ENCODE measurements at regions of chr19 and their contacts with region 1.

Region 1: GRCh38 chr19:40716655-40717324 is at the starts of genes COQ8B and ITPKC:
- DNase-seq: peak; percentile 100
- ATAC-seq: peak; percentile 90
- H3K4me3 ChIP-seq: peak within 1 kb of the TSS; percentile 55 to 84
- H3K27ac ChIP-seq: peak within 1 kb of the TSS; percentile 96 to 98
- H3K4me1 ChIP-seq: no peaks in the 10 kb centered on the region
- H3K27me3 ChIP-seq: no peaks in the 10 kb centered on the region
- total RNA-seq, gene COQ8B: 26.2 to 39.3 TPM
- total RNA-seq, gene ITPKC: 23.9 to 25.7 TPM

Region 2: DNA sequence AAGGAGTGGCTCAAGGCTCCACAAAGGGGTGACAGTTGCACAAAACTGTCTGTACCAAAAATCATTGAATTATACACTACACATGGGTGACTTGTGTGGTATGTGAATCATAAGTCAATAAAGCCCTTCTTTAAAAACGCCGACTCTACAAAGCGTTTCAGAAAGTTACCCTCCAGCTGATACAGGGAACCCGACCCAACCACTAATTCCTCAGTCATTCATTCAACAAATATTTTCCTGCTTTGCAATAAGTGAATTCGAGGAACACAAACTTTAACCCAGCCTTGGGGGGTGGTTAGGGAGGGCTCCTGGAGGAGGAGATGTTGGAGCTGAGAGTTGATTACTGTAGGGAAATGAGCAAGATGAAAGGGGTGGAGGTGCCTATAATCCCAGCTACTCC is 83.6 kb before region 1 on chr19:
- intact Hi-C with region 1: no loop called
- DNase-seq: no peak
- ATAC-seq: no peak
- H3K4me3 ChIP-seq: no peak overlapping the region
- H3K27ac ChIP-seq: peak overlapping the region in 1 of 2 donors; percentile 19
- H3K4me1 ChIP-seq: no peaks in the 10 kb centered on the region
- H3K27me3 ChIP-seq: no peaks in the 10 kb centered on the region

Region 3: DNA sequence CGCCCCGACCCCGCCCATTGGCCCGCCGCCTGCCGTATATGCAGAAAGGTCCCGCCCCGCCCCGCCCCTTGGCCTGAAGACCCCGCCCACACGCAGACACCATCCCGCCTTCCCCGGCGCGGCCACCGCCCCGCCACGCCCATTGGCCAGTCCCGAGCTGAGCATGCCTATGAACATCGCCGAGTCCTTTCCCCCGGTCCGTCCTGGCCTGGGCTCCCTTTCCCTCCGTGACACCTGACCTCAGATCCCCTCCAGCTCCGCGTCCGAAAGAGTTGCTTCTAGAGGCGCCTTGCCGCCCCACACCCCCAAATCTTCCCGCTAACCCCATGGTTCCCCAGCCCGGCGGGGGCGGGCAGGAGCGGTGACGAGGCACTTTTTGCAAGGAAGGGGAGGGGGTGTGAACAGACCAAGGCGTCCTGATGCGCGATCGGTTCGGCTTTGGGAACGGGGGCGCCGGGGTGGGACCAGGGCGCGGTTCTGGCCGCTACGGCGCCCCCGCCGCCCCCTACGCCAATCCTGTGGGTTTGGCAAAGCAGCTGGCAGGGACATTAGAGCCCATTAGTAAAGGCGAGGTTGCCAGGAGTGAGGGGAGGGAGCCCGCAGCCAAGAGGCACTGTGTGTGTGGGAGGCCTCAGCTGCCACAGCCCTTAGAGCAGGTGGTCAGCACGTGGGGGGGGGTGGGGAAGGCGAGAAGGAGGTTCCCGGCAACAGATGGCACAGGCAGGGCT is 25.9 kb before region 1 on chr19:
- intact Hi-C with region 1: loop called in 1 of 2 experiments (anchors 1 kb)
- DNase-seq: peak; percentile 96 to 99
- ATAC-seq: peak; percentile 92
- H3K4me3 ChIP-seq: peak overlapping the region; percentile 24 to 62
- H3K27ac ChIP-seq: peak overlapping the region in 1 of 2 donors; percentile 56
- H3K4me1 ChIP-seq: no peaks in the 10 kb centered on the region
- H3K27me3 ChIP-seq: no peaks in the 10 kb centered on the region

Region 4: GRCh38 chr19:40774916-40775631 is 58.3 kb after region 1 on chr19 and contains the start of gene MIA:
- intact Hi-C with region 1: no loop called
- DNase-seq: peak in 1 of 2 donors; percentile 38
- ATAC-seq: no peak
- H3K4me3 ChIP-seq: no peak within 1 kb of the TSS
- H3K27ac ChIP-seq: no peak within 1 kb of the TSS
- H3K4me1 ChIP-seq: no peaks in the 10 kb centered on the region
- H3K27me3 ChIP-seq: no peaks in the 10 kb centered on the region
- total RNA-seq, gene MIA: 1.7 to 3.6 TPM

Region 5: DNA sequence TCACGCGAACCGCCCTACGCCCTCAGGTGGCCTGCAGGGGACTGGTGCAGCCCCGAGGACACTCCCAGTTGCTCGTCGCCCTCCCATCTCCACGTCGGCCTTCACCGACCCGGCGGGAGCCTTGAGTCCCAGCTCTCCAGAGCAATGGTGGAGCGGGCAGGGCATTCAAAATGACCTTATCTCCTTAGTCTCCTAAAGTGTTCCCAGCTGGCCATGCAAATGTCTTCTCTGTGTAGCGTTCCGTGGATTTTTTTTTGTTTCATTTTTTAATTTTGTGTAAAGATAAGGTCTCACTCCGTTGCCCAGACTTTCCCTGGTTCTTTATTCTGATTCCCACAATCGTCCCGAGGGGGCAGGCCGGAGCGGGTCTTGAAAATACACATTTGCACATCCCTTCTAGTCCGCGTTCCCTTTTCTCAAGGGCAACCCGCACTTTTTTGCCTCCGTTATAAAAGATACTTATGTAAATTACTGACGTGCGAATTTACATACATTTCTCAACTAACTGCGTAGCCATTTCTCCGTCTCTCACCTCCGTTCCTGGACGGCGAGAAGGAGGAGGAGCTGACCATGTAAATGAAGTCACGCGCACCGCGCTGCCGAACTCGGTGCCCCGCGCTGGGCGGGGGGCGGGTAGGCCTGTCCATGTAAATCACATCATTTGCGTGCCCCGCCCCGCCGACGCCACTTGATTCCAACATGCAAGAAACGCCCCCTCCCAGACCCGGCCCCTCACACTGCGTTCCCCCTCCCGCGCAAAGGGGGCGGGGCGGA is 81.6 kb after region 1 on chr19:
- intact Hi-C with region 1: loop called in 1 of 2 experiments (anchors 5 kb)
- DNase-seq: peak; percentile 100
- ATAC-seq: peak; percentile 94
- H3K4me3 ChIP-seq: peak overlapping the region; percentile 21 to 40
- H3K27ac ChIP-seq: peak overlapping the region; percentile 6 to 81
- H3K4me1 ChIP-seq: no peaks in the 10 kb centered on the region
- H3K27me3 ChIP-seq: no peaks in the 10 kb centered on the region

Measured in aorta (tissue), 5 donors.